ENCODE measurements at regions of chr16 and their contacts with region 1.

Region 1: GRCh38 chr16:19898924-19899604 is 14.4 kb upstream of the GPRC5B start:
- DNase-seq: peak in 1 of 4 donors; percentile 23
- ATAC-seq: peak; percentile 78
- H3K4me3 ChIP-seq: no peak overlapping the region
- H3K27ac ChIP-seq: no peak overlapping the region
- H3K4me1 ChIP-seq: no peaks in the 10 kb centered on the region
- H3K27me3 ChIP-seq: peaks cover 0 to 14% of the 10 kb centered on the region in 2 donors
- CTCF ChIP-seq: peak; percentile 70 to 71

Region 2: GRCh38 chr16:20014034-20014433 is 115.0 kb after region 1 on chr16:
- intact Hi-C with region 1: no loop called
- DNase-seq: no peak
- ATAC-seq: no peak
- H3K4me3 ChIP-seq: no peak overlapping the region
- H3K27ac ChIP-seq: no peak overlapping the region
- H3K4me1 ChIP-seq: no peaks in the 10 kb centered on the region
- H3K27me3 ChIP-seq: peaks cover 0 to 7% of the 10 kb centered on the region in 2 donors
- CTCF ChIP-seq: no peak

Region 3: GRCh38 chr16:20383106-20384029 is 484.3 kb after region 1 on chr16:
- intact Hi-C with region 1: loop called in 1 of 2 experiments (anchors 10 kb)
- DNase-seq: peak in 2 of 4 donors; percentile 42 to 61
- ATAC-seq: peak; percentile 92
- H3K4me3 ChIP-seq: no peak overlapping the region
- H3K27ac ChIP-seq: no peak overlapping the region
- H3K4me1 ChIP-seq: peaks cover 0 to 6% of the 10 kb centered on the region in 2 donors
- H3K27me3 ChIP-seq: peaks cover 0 to 25% of the 10 kb centered on the region in 2 donors
- CTCF ChIP-seq: peak; percentile 80 to 82

Region 4: DNA sequence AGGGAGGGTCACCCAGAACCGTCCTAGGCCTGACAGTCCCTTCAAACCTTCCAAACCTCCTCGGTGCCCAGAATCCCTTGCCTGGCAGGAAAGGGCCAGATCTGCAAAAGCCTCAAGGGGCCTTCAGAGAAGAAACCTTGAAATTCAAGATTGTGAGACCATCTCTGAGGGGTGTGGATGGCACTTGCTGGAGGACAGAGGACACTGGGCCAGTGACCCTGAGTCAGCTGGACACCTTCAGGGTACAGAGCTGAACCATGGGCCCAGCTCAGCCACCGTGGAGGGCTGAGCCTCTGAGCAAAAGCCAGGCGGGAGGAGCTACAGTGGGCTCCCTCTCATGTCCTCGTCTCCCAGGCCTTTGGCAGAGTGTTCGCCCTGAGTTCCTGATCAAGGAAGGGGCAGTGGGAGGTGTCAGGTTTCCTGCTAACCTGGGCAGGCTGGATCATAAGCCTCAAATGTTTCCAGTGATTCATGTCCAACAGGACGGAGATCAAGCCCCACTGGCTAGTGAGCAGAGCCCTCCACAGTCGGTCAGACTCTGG is 502.5 kb after region 1 on chr16:
- intact Hi-C with region 1: no loop called
- DNase-seq: no peak
- ATAC-seq: no peak
- H3K4me3 ChIP-seq: no peak overlapping the region
- H3K27ac ChIP-seq: no peak overlapping the region
- H3K4me1 ChIP-seq: no peaks in the 10 kb centered on the region
- H3K27me3 ChIP-seq: no peaks in the 10 kb centered on the region
- CTCF ChIP-seq: no peak

Measured in left lung (tissue), 14 donors.